ENCODE measurements at regions of chr22 and their contacts with region 1.

Region 1: GRCh38 chr22:38733329-38733723 is 22.5 kb downstream of the SUN2 start:
- DNase-seq: peak; percentile 28 to 75 (median 43)
- H3K4me3 ChIP-seq: no peak overlapping the region
- H3K4me3 Mint-ChIP-seq: peak overlapping the region in 3 of 7 donors; percentile 27 to 80 (median 37)
- H3K27ac ChIP-seq: no peak overlapping the region
- H3K27ac Mint-ChIP-seq: peak overlapping the region; percentile 48 to 91 (median 87)
- H3K4me1 ChIP-seq: peaks cover 20% of the 10 kb centered on the region
- H3K4me1 Mint-ChIP-seq: peaks cover 37 to 80% (median 43%) of the 10 kb centered on the region in 3 donors
- H3K27me3 ChIP-seq: no peaks in the 10 kb centered on the region
- H3K27me3 Mint-ChIP-seq: peaks cover 0 to 9% of the 10 kb centered on the region in 2 donors

Region 2: GRCh38 chr22:38317122-38317994 is 416.0 kb before region 1 on chr22 and contains the start of gene CSNK1E:
- CTCF ChIA-PET with region 1: no interaction called
- POLR2A ChIA-PET with region 1: no interaction called
- DNase-seq: peak; percentile 67 to 81 (median 70)
- H3K4me3 ChIP-seq: peak within 1 kb of the TSS; percentile 60
- H3K4me3 Mint-ChIP-seq: peak within 1 kb of the TSS; percentile 86 to 95 (median 90)
- H3K27ac ChIP-seq: peak within 1 kb of the TSS; percentile 78
- H3K27ac Mint-ChIP-seq: peak within 1 kb of the TSS; percentile 93 to 100 (median 97)
- H3K4me1 ChIP-seq: peaks cover 46% of the 10 kb centered on the region
- H3K4me1 Mint-ChIP-seq: peaks cover 36 to 50% (median 42%) of the 10 kb centered on the region in 3 donors
- H3K27me3 ChIP-seq: no peaks in the 10 kb centered on the region
- H3K27me3 Mint-ChIP-seq: no peaks in the 10 kb centered on the region
- total RNA-seq, gene CSNK1E: 102 to 105 TPM

Region 3: GRCh38 chr22:38694945-38695344 is 38.4 kb before region 1 on chr22:
- CTCF ChIA-PET with region 1: no interaction called
- POLR2A ChIA-PET with region 1: no interaction called
- DNase-seq: no peak
- H3K4me3 ChIP-seq: no peak overlapping the region
- H3K4me3 Mint-ChIP-seq: peak overlapping the region in 1 of 7 donors; percentile 6
- H3K27ac ChIP-seq: no peak overlapping the region
- H3K27ac Mint-ChIP-seq: peak overlapping the region in 7 of 8 donors; percentile 3 to 74 (median 38)
- H3K4me1 ChIP-seq: peaks cover 46% of the 10 kb centered on the region
- H3K4me1 Mint-ChIP-seq: peaks cover 46 to 80% (median 75%) of the 10 kb centered on the region in 3 donors
- H3K27me3 ChIP-seq: no peaks in the 10 kb centered on the region
- H3K27me3 Mint-ChIP-seq: peaks cover 0 to 1% of the 10 kb centered on the region in 2 donors

Region 4: GRCh38 chr22:38705235-38706100 is 27.9 kb before region 1 on chr22 and contains the start of gene GTPBP1:
- CTCF ChIA-PET with region 1: interaction called, 5 read pairs
- POLR2A ChIA-PET with region 1: interaction called, 31 read pairs
- DNase-seq: peak; percentile 94 to 99 (median 98)
- H3K4me3 ChIP-seq: peak within 1 kb of the TSS; percentile 82
- H3K4me3 Mint-ChIP-seq: peak within 1 kb of the TSS; percentile 91 to 95 (median 93)
- H3K27ac ChIP-seq: peak within 1 kb of the TSS; percentile 74
- H3K27ac Mint-ChIP-seq: peak within 1 kb of the TSS; percentile 89 to 100 (median 98)
- H3K4me1 ChIP-seq: peaks cover 48% of the 10 kb centered on the region
- H3K4me1 Mint-ChIP-seq: peaks cover 55 to 69% (median 60%) of the 10 kb centered on the region in 3 donors
- H3K27me3 ChIP-seq: no peaks in the 10 kb centered on the region
- H3K27me3 Mint-ChIP-seq: peaks cover 0 to 5% of the 10 kb centered on the region in 2 donors
- total RNA-seq, gene GTPBP1: 62.7 to 63.7 TPM

Region 5: DNA sequence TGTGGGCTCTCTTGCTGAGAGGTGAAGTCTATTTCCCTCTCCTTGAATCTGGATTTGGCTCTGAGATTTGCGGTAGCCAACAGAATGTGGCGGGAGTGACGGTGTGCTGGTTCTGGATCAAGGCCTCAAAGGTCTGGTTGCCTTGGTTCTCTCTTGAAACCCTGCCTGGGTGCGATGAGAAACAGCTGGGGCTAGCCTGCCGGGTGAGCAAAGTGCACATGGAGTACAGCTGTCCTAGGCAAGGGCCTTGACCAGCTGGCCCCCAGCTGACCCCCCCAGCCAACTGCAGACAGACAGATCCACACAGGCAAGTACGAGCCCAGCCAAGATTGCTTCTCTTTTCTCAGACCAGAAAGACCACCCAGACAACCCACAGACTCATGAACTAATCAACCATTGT is 11.7 kb after region 1 on chr22:
- CTCF ChIA-PET with region 1: interaction called, 83 read pairs
- POLR2A ChIA-PET with region 1: interaction called, 275 read pairs
- DNase-seq: no peak
- H3K4me3 ChIP-seq: no peak overlapping the region
- H3K4me3 Mint-ChIP-seq: peak overlapping the region in 1 of 7 donors; percentile 24
- H3K27ac ChIP-seq: no peak overlapping the region
- H3K27ac Mint-ChIP-seq: peak overlapping the region in 7 of 8 donors; percentile 29 to 88 (median 70)
- H3K4me1 ChIP-seq: peaks cover 50% of the 10 kb centered on the region
- H3K4me1 Mint-ChIP-seq: peaks cover 32 to 75% (median 32%) of the 10 kb centered on the region in 3 donors
- H3K27me3 ChIP-seq: no peaks in the 10 kb centered on the region
- H3K27me3 Mint-ChIP-seq: no peaks in the 10 kb centered on the region

Region 6: GRCh38 chr22:38755911-38756532 is 22.7 kb after region 1 on chr22 and contains the start of gene SUN2:
- CTCF ChIA-PET with region 1: interaction called, 83 read pairs
- POLR2A ChIA-PET with region 1: interaction called, 275 read pairs
- DNase-seq: peak; percentile 91 to 96 (median 95)
- H3K4me3 ChIP-seq: peak within 1 kb of the TSS; percentile 98
- H3K4me3 Mint-ChIP-seq: peak within 1 kb of the TSS; percentile 93 to 100 (median 99)
- H3K27ac ChIP-seq: peak within 1 kb of the TSS; percentile 70
- H3K27ac Mint-ChIP-seq: peak within 1 kb of the TSS; percentile 81 to 100 (median 98)
- H3K4me1 ChIP-seq: peaks cover 57% of the 10 kb centered on the region
- H3K4me1 Mint-ChIP-seq: peaks cover 59 to 65% (median 63%) of the 10 kb centered on the region in 3 donors
- H3K27me3 ChIP-seq: no peaks in the 10 kb centered on the region
- H3K27me3 Mint-ChIP-seq: peaks cover 0 to 8% of the 10 kb centered on the region in 2 donors
- total RNA-seq, gene SUN2: 168 to 185 TPM

Region 7: DNA sequence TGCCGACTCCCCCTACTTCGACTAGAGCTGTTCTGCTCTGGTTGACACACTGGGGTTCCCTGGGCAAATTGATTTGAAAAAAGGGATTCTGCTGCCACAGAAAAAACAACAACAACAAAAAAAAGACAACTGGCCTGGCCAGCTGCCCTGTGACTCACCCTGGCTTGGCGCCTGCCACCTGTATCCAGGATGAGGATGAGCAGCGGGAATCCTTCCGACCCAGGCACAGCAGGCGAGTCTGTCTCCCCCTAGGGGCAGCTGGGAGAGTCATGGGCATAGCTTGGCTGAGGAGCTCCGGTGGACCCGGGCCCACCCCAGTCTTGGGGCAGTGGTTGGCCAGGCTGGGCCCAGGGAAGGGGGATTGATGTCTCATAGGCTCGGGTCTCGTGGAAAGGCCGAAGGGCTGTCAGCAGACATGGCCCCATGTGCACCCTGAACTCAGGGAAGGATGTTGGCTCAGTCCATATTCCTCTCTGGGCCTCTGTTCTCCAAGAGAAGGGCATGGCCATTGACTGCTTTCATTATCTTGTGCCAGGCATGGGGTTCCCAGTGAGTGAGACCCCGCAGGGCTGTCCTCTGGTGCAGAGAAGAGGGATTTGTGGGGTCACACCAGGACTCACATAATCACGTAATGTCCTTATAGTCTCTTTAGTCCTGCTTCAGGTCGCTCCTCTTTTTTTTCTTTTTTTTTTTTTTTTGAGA is 32.9 kb after region 1 on chr22:
- CTCF ChIA-PET with region 1: interaction called, 78 read pairs
- POLR2A ChIA-PET with region 1: interaction called, 20 read pairs
- DNase-seq: peak; percentile 19 to 69 (median 41)
- H3K4me3 ChIP-seq: no peak overlapping the region
- H3K4me3 Mint-ChIP-seq: no peak overlapping the region
- H3K27ac ChIP-seq: no peak overlapping the region
- H3K27ac Mint-ChIP-seq: no peak overlapping the region
- H3K4me1 ChIP-seq: peaks cover 9% of the 10 kb centered on the region
- H3K4me1 Mint-ChIP-seq: peaks cover 4 to 14% (median 6%) of the 10 kb centered on the region in 3 donors
- H3K27me3 ChIP-seq: no peaks in the 10 kb centered on the region
- H3K27me3 Mint-ChIP-seq: peaks cover 0 to under 1% of the 10 kb centered on the region in 2 donors

Region 8: DNA sequence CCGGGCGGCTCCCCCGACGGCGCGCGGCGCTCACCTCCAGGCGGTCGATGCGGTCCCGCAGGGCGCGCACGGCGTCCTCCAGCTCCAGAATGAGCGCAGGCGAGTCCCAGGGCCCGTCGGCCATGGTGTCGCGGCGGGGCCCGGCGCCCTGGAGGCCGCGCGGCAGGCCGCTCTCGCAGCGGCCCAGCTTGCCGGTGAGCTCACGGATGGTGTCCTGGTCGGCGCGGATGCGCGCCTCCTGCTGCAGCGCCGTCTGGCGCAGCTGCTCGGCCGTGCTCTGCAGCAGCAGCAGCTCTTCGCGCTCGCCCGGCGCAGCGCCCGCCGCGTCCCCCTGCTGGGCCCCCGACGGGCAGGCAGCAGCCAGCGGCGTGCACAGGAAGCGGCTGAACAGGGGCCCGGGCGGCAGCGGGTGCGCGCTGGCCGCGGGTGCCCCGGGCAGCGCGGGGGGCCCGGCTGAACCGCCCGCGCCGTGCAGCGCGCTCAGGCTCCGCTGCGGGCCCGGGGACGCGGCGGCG is 109.9 kb after region 1 on chr22:
- CTCF ChIA-PET with region 1: interaction called, 13 read pairs
- POLR2A ChIA-PET with region 1: interaction called, 10 read pairs
- DNase-seq: peak; percentile 18 to 78 (median 58)
- H3K4me3 ChIP-seq: peak overlapping the region; percentile 43
- H3K4me3 Mint-ChIP-seq: peak overlapping the region in 2 of 7 donors; percentile 31 to 84
- H3K27ac ChIP-seq: no peak overlapping the region
- H3K27ac Mint-ChIP-seq: no peak overlapping the region
- H3K4me1 ChIP-seq: peaks cover 20% of the 10 kb centered on the region
- H3K4me1 Mint-ChIP-seq: peaks cover 21 to 38% (median 34%) of the 10 kb centered on the region in 3 donors
- H3K27me3 ChIP-seq: no peaks in the 10 kb centered on the region
- H3K27me3 Mint-ChIP-seq: peaks cover 7 to 9% of the 10 kb centered on the region in 2 donors

Measured in CD8-positive, alpha-beta memory T cell (primary cell).